ENCODE measurements at regions of chr11 and their contacts with region 1.

Region 1: DNA sequence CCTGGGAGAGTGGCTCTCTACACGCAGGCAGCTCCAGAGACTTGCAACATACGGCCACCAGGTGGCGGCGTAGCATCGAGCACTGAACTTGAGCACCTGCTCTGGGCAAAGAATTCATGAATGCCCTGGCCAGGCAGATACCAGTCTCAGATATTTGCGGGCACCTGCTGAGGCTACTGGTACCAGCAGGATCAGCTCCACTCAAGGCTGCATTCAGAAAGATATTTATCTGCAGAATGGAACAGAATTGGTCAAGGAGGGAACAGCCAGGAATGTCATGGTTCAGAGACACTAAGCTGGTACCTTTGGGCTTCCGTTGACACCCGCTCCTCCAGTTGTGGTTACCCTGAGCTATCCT is 10.8 kb upstream of the CCDC86 start:
- DNase-seq: peak; percentile 26
- ATAC-seq: peak; percentile 98
- H3K4me3 ChIP-seq: no peak overlapping the region
- H3K27ac ChIP-seq: no peak overlapping the region
- H3K4me1 ChIP-seq: no peaks in the 10 kb centered on the region; the same call in 1 of the 2 replicates
- H3K27me3 ChIP-seq: no peaks in the 10 kb centered on the region; a peak in 2 of 4 replicates
- CTCF ChIP-seq: peak; percentile 94 to 95 (median 95)
- EP300 ChIP-seq: no peak
- POLR2A ChIP-seq: no peak
- RAD21 ChIP-seq: peak; percentile 96

Region 2: GRCh38 chr11:59263225-59263894 is 1567.8 kb before region 1 on chr11:
- CTCF ChIA-PET with region 1: no interaction called
- POLR2A ChIA-PET with region 1: no interaction called
- RAD21 ChIA-PET with region 1: no interaction called
- SMC1A ChIA-PET with region 1: no interaction called
- in situ Hi-C with region 1: no loop called
- intact Hi-C with region 1: no loop called
- DNase-seq: no peak
- ATAC-seq: peak; percentile 53
- H3K4me3 ChIP-seq: no peak overlapping the region
- H3K27ac ChIP-seq: no peak overlapping the region
- H3K4me1 ChIP-seq: peaks cover 30% of the 10 kb centered on the region
- H3K27me3 ChIP-seq: no peaks in the 10 kb centered on the region
- CTCF ChIP-seq: peak; percentile 56 to 71 (median 58)
- EP300 ChIP-seq: no peak
- POLR2A ChIP-seq: no peak
- RAD21 ChIP-seq: peak; percentile 82

Region 3: DNA sequence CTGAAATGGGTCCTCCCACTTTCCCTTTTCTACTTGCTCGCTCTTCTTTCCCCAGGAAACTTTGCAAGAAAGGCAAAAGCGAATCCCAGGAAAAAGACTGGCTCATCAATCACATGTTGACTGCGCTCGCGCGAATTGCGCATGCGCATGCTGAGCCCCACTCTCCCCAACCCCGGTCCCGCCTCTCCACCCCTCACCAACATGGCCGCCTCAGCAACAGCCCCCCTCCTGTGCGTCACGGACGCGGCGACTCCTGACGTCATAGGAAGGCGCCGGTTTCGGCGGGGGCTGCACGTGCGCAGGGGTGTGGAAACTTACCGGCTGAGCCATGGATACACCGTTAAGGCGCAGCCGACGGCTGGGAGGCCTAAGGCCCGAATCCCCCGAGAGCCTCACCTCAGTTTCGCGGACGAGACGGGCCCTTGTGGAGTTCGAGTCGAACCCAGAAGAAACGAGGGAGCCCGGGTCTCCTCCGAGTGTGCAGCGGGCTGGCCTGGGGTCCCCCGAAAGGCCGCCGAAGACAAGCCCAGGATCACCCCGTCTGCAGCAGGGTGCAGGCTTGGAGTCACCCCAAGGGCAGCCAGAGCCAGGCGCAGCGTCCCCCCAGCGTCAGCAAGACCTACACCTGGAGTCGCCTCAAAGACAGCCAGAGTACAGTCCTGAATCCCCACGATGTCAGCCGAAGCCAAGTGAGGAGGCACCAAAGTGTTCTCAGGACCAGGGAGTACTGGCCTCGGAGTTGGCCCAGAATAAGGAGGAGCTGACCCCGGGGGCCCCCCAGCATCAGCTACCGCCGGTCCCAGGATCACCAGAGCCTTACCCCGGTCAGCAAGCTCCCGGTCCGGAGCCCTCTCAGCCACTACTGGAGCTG is 10.9 kb after region 1 on chr11 and contains the start of gene CCDC86:
- CTCF ChIA-PET with region 1: interaction called, 18 read pairs
- POLR2A ChIA-PET with region 1: no interaction called
- RAD21 ChIA-PET with region 1: interaction called, 9 read pairs
- SMC1A ChIA-PET with region 1: interaction called, 6 read pairs
- in situ Hi-C with region 1: no loop called
- intact Hi-C with region 1: no loop called
- DNase-seq: peak; percentile 78
- ATAC-seq: peak; percentile 87
- H3K4me3 ChIP-seq: peak within 1 kb of the TSS; percentile 92
- H3K27ac ChIP-seq: peak within 1 kb of the TSS; percentile 72
- H3K4me1 ChIP-seq: peaks cover 4% of the 10 kb centered on the region
- H3K27me3 ChIP-seq: no peaks in the 10 kb centered on the region
- CTCF ChIP-seq: no peak
- EP300 ChIP-seq: peak in 1 of 2 experiments; percentile 18; a peak in 1 of 4 replicates
- POLR2A ChIP-seq: peak; percentile 73
- RAD21 ChIP-seq: no peak
- polyA plus RNA-seq, gene CCDC86: 2.0 to 4.4 TPM

Region 4: GRCh38 chr11:60899046-60899936 is 68.2 kb after region 1 on chr11:
- CTCF ChIA-PET with region 1: interaction called, 135 read pairs
- POLR2A ChIA-PET with region 1: no interaction called
- RAD21 ChIA-PET with region 1: interaction called, 15 read pairs
- SMC1A ChIA-PET with region 1: interaction called, 57 read pairs
- in situ Hi-C with region 1: loop called (anchors 5 kb)
- intact Hi-C with region 1: loop called (anchors 1 kb)
- DNase-seq: no peak
- ATAC-seq: peak; percentile 93
- H3K4me3 ChIP-seq: no peak overlapping the region
- H3K27ac ChIP-seq: no peak overlapping the region
- H3K4me1 ChIP-seq: no peaks in the 10 kb centered on the region; the same call in 1 of the 2 replicates
- H3K27me3 ChIP-seq: no peaks in the 10 kb centered on the region
- CTCF ChIP-seq: peak; percentile 85 to 98 (median 94)
- EP300 ChIP-seq: no peak
- POLR2A ChIP-seq: no peak
- RAD21 ChIP-seq: peak; percentile 64

Region 5: GRCh38 chr11:61129639-61130523 is 298.8 kb after region 1 on chr11:
- CTCF ChIA-PET with region 1: interaction called, 36 read pairs
- POLR2A ChIA-PET with region 1: no interaction called
- RAD21 ChIA-PET with region 1: interaction called, 7 read pairs
- SMC1A ChIA-PET with region 1: interaction called, 8 read pairs
- in situ Hi-C with region 1: no loop called
- intact Hi-C with region 1: loop called (anchors 1 kb)
- DNase-seq: peak; percentile 44
- ATAC-seq: peak; percentile 97
- H3K4me3 ChIP-seq: no peak overlapping the region
- H3K27ac ChIP-seq: peak overlapping the region; percentile 52; the same call in 1 of the 2 replicates
- H3K4me1 ChIP-seq: peaks cover 7% of the 10 kb centered on the region
- H3K27me3 ChIP-seq: no peaks in the 10 kb centered on the region
- CTCF ChIP-seq: peak; percentile 100
- EP300 ChIP-seq: no peak
- POLR2A ChIP-seq: no peak; the same call in 1 of the 2 replicates
- RAD21 ChIP-seq: peak; percentile 100